ENCODE measurements at regions of chr2 and their contacts with region 1.

Region 1: GRCh38 chr2:130797493-130798435 is 39.0 kb upstream of the ARHGEF4 start:
- DNase-seq: peak; percentile 26
- H3K4me3 ChIP-seq: peak overlapping the region; percentile 88
- H3K27me3 ChIP-seq: peaks cover 2% of the 10 kb centered on the region; the same call in 1 of the 2 replicates
- CTCF ChIP-seq: peak; percentile 94

Region 2: DNA sequence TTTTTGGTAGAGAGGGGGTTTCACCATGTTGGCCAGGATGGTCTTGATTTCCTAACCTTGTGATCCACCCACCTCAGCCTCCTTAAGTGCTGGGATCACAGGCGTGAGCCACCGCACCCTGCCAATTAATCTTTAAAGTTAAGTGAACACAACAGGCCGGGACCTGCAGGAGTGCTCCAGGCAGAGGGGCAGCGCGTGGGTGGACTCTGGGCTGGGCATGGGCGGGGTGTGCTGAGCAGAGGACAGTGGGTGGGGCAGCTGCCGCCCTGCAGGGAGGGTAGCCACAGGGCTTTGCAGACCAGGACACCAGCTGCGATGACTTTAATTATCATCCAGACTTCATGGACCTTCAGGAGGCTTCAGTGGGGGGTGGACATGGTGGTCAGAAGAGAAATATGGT is 77.7 kb before region 1 on chr2:
- CTCF ChIA-PET with region 1: no interaction called
- POLR2A ChIA-PET with region 1: no interaction called
- DNase-seq: no peak
- H3K4me3 ChIP-seq: no peak overlapping the region
- H3K27me3 ChIP-seq: no peaks in the 10 kb centered on the region
- CTCF ChIP-seq: no peak

Region 3: DNA sequence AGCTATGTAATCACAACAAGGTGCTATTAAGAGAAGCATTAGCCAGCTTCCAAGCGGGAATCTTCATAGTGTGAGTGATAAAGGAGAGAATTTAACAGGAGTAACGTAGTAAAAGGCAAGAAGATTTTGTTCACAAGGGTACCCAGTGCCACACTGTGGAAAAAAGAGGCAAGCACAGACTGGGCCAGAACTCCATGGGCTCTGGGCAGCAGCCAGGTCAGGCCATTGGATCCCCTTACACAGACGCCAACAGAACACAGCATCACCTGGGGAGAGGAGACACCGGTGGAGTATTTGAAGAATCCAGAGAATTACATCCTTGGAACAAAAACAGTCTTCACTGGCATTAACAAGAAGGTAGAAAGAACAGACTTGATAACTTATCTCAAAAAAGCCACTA is 21.2 kb before region 1 on chr2:
- CTCF ChIA-PET with region 1: interaction called, 16 read pairs
- POLR2A ChIA-PET with region 1: no interaction called
- DNase-seq: no peak
- H3K4me3 ChIP-seq: no peak overlapping the region
- H3K27me3 ChIP-seq: no peaks in the 10 kb centered on the region
- CTCF ChIP-seq: no peak

Region 4: GRCh38 chr2:130785466-130786055 is 12.2 kb before region 1 on chr2:
- CTCF ChIA-PET with region 1: interaction called, 17 read pairs
- POLR2A ChIA-PET with region 1: no interaction called
- DNase-seq: no peak
- H3K4me3 ChIP-seq: no peak overlapping the region
- H3K27me3 ChIP-seq: no peaks in the 10 kb centered on the region
- CTCF ChIP-seq: no peak

Region 5: GRCh38 chr2:130807659-130808385 is 10.1 kb after region 1 on chr2:
- CTCF ChIA-PET with region 1: interaction called, 17 read pairs
- POLR2A ChIA-PET with region 1: no interaction called
- DNase-seq: no peak
- H3K4me3 ChIP-seq: no peak overlapping the region
- H3K27me3 ChIP-seq: no peaks in the 10 kb centered on the region
- CTCF ChIP-seq: no peak

Region 6: GRCh38 chr2:130819603-130820278 is 22.0 kb after region 1 on chr2:
- CTCF ChIA-PET with region 1: interaction called, 13 read pairs
- POLR2A ChIA-PET with region 1: no interaction called
- DNase-seq: no peak
- H3K4me3 ChIP-seq: no peak overlapping the region
- H3K27me3 ChIP-seq: no peaks in the 10 kb centered on the region
- CTCF ChIP-seq: no peak

Region 7: GRCh38 chr2:130873700-130874346 is 76.1 kb after region 1 on chr2:
- CTCF ChIA-PET with region 1: interaction called, 177 read pairs
- POLR2A ChIA-PET with region 1: no interaction called
- DNase-seq: no peak
- H3K4me3 ChIP-seq: no peak overlapping the region
- H3K27me3 ChIP-seq: 0 out of 2 replicates have a peak, but pooled peaks cover 1% of the 10 kb centered on the region
- CTCF ChIP-seq: peak; percentile 80

Region 8: DNA sequence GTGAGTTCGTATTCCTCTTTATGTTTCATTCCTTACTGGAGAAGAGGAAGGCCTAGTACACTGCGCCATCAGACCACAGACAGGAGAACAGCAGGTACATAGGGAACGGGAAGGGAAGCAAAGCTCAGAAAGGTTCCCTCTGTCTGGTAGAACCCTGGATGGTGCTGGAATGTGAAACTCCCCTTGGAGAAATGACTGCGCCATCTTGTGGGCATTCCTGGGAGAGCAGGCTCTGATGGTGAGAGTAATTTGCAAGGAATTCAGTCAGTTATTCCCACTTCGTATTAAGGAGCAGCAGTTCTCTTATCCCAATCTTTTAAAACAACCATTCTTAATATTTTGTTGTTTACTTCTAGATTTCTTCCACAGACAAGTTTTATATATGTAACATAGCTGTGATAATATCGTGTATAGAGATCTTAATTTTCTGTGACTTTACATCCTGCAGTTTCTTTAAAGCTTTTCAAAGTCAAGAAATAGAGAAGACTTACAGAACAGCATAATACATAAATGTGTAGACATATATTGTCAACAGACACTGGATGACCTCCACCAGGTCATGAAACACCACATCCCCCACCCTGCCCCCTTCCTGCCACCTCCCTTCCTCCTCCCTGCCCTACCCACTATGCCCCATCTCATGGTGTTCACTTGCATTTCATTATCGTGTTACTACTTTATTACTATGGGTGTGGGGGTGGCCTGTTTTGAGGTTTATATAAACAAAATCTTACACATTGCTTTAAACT is 122.8 kb after region 1 on chr2:
- CTCF ChIA-PET with region 1: interaction called, 41 read pairs
- POLR2A ChIA-PET with region 1: no interaction called
- DNase-seq: peak; percentile 3
- H3K4me3 ChIP-seq: no peak overlapping the region
- H3K27me3 ChIP-seq: no peaks in the 10 kb centered on the region
- CTCF ChIP-seq: peak; percentile 91